Gastrocnemius medialis (tissue), 4 donors: ENCODE measurements at regions of chr1 and their contacts with region 1.

Region 1: DNA sequence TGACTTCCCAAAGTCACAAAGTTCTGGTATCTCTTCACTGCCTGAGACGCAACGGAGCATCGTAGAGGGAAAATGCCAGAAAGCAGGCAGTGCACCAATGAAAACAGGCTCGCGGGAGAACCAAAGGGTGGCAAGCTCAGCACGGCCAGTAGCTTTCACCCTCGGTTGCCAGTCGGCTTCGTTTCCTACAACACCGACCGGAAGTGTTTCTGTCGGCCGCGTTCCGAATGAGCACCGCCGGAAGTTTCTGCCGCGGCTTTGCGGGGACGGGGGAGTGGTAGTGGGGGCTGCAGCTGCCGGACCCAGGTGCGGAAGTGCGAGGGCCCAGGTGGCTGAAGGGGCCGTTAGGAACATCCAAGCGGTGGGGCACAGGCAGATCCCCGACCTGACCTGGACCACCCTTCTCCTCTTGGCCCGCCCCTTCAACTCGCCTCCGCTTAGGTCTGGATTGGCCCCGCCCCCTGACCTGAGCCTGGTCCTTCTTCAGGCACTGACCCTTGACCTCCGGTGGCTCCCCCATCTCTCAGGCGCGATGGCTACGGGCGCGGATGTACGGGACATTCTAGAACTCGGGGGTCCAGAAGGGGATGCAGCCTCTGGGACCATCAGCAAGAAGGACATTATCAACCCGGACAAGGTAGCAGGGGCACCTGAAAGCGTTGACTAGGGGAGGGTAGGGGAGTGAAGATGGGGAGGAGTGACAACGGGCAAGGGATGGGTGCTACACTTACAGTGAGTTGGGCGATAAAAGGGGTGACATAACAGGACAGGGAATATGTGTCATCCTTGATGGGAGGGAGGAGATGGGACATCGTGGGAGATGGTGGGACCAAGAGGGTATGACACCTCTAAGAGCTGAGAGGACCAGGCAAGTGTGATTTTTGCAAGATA is at the start of gene DMAP1:
- DNase-seq: peak; percentile 71 to 74
- ATAC-seq: peak; percentile 92 to 96
- H3K4me3 ChIP-seq: peak within 1 kb of the TSS; percentile 76 to 90 (median 81)
- H3K27ac ChIP-seq: peak within 1 kb of the TSS; percentile 73 to 88 (median 82)
- H3K4me1 ChIP-seq: peaks cover 18 to 22% of the 10 kb centered on the region in 2 donors
- H3K27me3 ChIP-seq: no peaks in the 10 kb centered on the region
- CTCF ChIP-seq: peak in 2 of 5 experiments; percentile 16 to 26
- POLR2A ChIP-seq: no peak
- total RNA-seq, gene DMAP1: 24.9 to 42.2 (median 34.9) TPM

Region 2: DNA sequence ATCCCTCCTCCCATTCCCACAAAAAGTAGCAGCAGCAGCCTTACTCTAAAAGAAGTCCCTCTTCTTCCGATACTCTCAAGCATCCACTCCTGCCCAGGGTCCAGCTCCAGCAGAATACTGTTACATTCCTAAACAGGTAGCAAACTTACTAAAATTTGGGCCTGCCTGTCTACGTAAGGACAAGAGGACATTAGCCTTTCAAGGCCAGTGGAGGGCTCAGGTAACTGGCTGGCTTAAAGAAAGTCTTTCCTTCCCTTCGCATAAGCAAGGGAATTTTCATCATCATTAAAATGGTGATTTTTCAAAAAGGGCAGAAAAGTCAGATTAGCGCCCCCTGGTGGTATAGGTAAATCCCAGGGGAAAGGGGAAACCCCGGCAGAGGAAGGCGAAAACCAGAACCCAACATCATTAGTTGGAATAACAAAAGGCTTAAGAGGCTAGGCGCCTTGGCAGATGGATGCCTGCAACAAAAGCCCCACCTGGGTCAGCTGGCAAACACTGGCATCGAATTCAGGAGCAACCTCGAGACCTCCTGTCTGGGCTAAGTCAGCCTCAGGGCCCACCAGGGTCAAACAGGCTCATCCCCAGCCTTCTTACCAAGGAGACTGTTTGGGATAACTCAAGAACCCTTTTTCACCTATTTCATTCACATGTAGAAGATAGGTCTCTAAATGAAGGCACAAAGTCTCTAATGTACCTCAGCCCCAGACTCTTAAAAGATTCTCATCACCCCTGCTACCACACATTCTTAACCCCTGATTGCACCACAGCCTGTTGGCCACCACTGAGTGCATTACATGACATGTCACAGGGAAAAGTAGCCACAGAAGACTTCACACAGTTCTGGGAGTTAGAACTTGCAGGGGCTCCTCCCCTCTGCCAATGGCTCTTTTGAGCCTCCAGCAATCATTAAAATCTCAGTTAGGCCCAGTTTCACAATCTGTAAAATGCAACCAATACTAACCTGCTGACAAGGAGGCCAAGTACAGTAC is 104.9 kb after region 1 on chr1:
- in situ Hi-C with region 1: loop called in 2 of 4 experiments (anchors 10 kb)
- intact Hi-C with region 1: loop called (anchors 5 kb)
- DNase-seq: no peak
- ATAC-seq: peak in 1 of 2 donors; percentile 33
- H3K4me3 ChIP-seq: no peak overlapping the region
- H3K27ac ChIP-seq: no peak overlapping the region
- H3K4me1 ChIP-seq: peaks cover 6 to 8% of the 10 kb centered on the region in 2 donors
- H3K27me3 ChIP-seq: no peaks in the 10 kb centered on the region
- CTCF ChIP-seq: peak; percentile 50 to 77 (median 73)
- POLR2A ChIP-seq: no peak

Region 3: DNA sequence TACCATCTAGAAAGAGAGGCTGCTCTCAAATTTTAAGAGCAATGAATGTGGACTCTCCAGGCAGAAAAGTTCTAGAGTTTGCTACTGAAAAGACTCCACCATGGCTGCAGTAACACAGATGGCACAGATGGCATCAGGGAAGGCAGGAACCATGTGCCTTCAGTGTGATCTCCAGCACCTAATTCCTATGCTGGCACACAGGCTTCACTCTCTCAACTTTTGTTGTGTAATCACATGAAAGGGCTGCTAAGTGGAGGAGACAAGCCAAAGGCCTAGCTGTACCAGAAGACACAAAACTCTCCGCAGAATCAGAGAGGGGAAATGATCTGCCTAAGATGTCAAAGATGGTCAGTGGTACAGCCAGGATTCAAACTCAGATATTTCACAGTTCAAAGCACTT is 110.5 kb after region 1 on chr1:
- in situ Hi-C with region 1: loop called in 2 of 4 experiments (anchors 10 kb)
- intact Hi-C with region 1: loop called (anchors 5 kb)
- DNase-seq: peak; percentile 51 to 55
- ATAC-seq: peak; percentile 93 to 97
- H3K4me3 ChIP-seq: no peak overlapping the region
- H3K27ac ChIP-seq: peak overlapping the region in 3 of 4 donors; percentile 4 to 48 (median 14)
- H3K4me1 ChIP-seq: peaks cover 39 to 53% of the 10 kb centered on the region in 2 donors
- H3K27me3 ChIP-seq: no peaks in the 10 kb centered on the region
- CTCF ChIP-seq: no peak
- POLR2A ChIP-seq: no peak

Region 4: DNA sequence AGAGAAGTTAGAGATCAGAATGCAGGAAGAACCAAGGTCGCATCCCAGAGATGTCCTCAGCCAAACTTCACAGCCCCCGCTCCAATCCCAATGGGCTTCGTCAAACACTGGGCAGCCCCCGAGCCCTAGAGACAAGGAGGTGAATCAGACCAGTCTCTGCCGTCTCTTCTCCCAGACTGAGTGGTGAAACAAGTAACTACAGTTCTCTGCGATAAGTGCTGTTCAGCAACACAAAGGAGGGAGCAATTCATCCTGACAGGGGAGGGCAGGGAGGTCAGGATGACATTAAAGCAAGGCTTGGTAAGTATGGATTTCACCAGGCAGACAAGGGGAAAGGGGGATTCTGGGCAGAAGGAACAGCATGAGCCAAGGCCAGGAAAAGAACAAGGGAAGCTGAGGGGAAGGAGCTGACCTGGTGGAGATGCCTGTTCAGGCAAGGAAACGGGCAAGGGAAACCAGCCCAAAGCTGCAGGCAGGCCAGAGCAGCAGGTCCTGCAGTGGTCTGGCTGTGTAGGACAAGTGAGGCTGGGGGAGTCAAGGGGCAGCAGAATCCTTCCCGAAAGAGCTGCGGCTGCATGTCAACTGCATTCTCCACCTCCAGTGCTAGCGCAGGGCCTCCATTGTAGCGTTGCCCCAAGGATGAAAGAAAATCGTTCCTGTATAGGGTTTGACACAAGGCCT is 155.1 kb after region 1 on chr1:
- in situ Hi-C with region 1: no loop called
- intact Hi-C with region 1: no loop called
- DNase-seq: no peak
- ATAC-seq: no peak
- H3K4me3 ChIP-seq: no peak overlapping the region
- H3K27ac ChIP-seq: no peak overlapping the region
- H3K4me1 ChIP-seq: no peaks in the 10 kb centered on the region
- H3K27me3 ChIP-seq: no peaks in the 10 kb centered on the region
- CTCF ChIP-seq: no peak
- POLR2A ChIP-seq: no peak

Region 5: GRCh38 chr1:44594871-44595746 is 381.6 kb after region 1 on chr1:
- in situ Hi-C with region 1: loop called (anchors 10 to 25 kb)
- intact Hi-C with region 1: loop called (anchors 1 kb)
- DNase-seq: peak; percentile 54
- ATAC-seq: peak; percentile 55 to 77
- H3K4me3 ChIP-seq: no peak overlapping the region
- H3K27ac ChIP-seq: no peak overlapping the region
- H3K4me1 ChIP-seq: no peaks in the 10 kb centered on the region
- H3K27me3 ChIP-seq: peaks cover 0 to 10% (median 0%) of the 10 kb centered on the region in 3 donors
- CTCF ChIP-seq: peak; percentile 83 to 97 (median 93)
- POLR2A ChIP-seq: no peak

Region 6: DNA sequence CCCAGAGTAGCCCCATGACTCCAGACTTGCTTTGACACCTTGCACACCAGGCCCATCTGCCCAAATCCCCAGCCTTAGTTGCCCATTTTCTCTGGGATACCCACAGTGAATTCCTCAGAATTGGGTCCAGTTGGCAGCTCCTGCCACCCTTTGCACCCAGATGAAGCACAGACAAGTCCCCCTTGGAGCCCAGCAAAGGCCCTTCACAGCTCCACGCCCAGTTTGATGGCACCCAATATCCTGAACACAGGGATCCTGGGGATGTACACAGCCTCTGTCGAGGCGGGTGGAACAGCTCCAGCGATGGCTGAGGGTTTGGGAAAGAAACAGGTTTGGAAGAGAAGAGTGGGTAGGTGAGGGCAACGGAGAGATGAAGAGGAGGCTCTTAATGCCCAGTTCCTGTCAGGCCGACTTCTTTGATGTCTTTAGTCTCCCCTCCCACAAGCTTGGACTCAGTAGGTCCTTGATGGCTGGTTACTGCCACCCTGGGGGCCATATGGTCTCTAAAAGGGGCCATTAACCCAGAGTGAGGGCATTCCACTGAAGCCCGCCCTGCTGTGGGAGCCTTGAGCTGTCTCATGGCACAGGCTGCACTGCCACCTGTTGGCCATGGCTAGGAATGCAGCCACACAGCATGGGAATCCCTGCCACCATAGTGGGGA is 439.1 kb after region 1 on chr1:
- in situ Hi-C with region 1: no loop called
- intact Hi-C with region 1: loop called (anchors 10 kb)
- DNase-seq: peak; percentile 43 to 72
- ATAC-seq: peak; percentile 79 to 88
- H3K4me3 ChIP-seq: no peak overlapping the region
- H3K27ac ChIP-seq: no peak overlapping the region
- H3K4me1 ChIP-seq: peaks cover 0 to 18% of the 10 kb centered on the region in 2 donors
- H3K27me3 ChIP-seq: no peaks in the 10 kb centered on the region
- CTCF ChIP-seq: peak; percentile 91 to 97 (median 96)
- POLR2A ChIP-seq: no peak